ENCODE measurements at regions of chr3 and their contacts with region 1.

Region 1: GRCh38 chr3:125437631-125438435 is 62.7 kb upstream of the ZNF148 start:
- DNase-seq: peak; percentile 47
- H3K4me3 ChIP-seq: no peak overlapping the region
- H3K27ac ChIP-seq: no peak overlapping the region
- H3K4me1 ChIP-seq: no peaks in the 10 kb centered on the region
- CTCF ChIP-seq: peak; percentile 99

Region 2: GRCh38 chr3:124995460-124995994 is 442.3 kb before region 1 on chr3:
- CTCF ChIA-PET with region 1: interaction called, 3 read pairs
- POLR2A ChIA-PET with region 1: no interaction called
- intact Hi-C with region 1: loop called (anchors 1 kb)
- DNase-seq: peak; percentile 42
- H3K4me3 ChIP-seq: no peak overlapping the region
- H3K27ac ChIP-seq: no peak overlapping the region
- H3K4me1 ChIP-seq: no peaks in the 10 kb centered on the region
- CTCF ChIP-seq: peak; percentile 78

Region 3: GRCh38 chr3:125212509-125213244 is 225.2 kb before region 1 on chr3 and contains the start of gene SLC12A8:
- CTCF ChIA-PET with region 1: no interaction called
- POLR2A ChIA-PET with region 1: no interaction called
- intact Hi-C with region 1: no loop called
- DNase-seq: no peak
- H3K4me3 ChIP-seq: no peak within 1 kb of the TSS
- H3K27ac ChIP-seq: no peak within 1 kb of the TSS
- H3K4me1 ChIP-seq: no peaks in the 10 kb centered on the region
- CTCF ChIP-seq: no peak
- total RNA-seq, gene SLC12A8: 0.13 and 1.0 TPM in 2 replicates

Region 4: DNA sequence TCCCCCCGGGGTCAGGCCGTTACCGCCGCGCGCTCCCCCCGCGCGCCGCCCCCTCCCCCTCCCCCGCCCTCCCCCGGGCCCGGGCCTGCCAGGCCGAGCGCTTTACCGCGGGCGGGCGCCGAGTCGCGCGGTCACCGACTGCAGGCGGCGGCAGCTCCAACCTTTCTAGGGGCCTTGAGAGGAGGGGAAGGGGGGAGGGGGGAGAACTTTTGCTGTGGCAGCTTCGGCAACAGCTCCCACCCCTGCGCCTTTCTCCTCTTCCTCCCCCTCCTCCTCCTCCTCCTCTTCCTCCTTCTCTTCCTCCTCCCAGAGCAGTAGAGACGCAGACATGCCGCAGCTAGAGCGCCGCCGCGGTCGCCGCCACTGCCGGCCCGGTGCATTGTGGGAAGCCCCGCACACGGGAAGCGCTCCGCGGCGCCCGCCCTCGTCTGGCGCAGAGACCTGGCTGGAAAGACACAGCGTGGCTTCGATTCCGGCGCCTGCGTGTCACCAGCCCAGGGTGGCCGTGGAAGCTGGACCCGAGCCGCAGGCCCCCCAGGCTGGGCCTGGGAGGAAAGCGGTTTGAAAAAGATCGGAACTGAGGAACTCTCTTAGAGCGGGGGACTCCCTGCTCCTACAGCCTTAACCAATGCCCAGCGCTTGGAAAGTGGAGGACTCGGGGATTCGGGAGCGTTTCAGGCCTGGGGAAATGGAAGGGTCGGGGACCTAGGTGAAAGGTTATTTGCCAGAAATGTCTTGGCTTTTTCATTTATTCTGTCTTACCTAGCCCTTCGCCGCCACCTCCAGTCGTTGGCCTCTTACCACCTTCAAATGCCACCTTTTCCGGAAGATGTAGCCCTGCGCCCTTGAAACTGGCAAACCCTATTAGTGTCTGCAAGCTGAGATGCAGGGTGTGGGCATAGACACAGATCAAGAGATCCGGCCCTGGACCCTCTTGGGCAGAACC is 62.6 kb before region 1 on chr3 and contains the start of gene ZNF148:
- CTCF ChIA-PET with region 1: no interaction called
- POLR2A ChIA-PET with region 1: no interaction called
- intact Hi-C with region 1: no loop called
- DNase-seq: peak; percentile 92
- H3K4me3 ChIP-seq: peak within 1 kb of the TSS; percentile 94
- H3K27ac ChIP-seq: peak within 1 kb of the TSS; percentile 44
- H3K4me1 ChIP-seq: peaks cover 12% of the 10 kb centered on the region
- CTCF ChIP-seq: no peak
- total RNA-seq, gene ZNF148: 19.8 and 20.9 TPM in 2 replicates